Sciatic nerve (tissue), 2 donors: ENCODE measurements at regions of chr4 and their contacts with region 1.

Region 1: DNA sequence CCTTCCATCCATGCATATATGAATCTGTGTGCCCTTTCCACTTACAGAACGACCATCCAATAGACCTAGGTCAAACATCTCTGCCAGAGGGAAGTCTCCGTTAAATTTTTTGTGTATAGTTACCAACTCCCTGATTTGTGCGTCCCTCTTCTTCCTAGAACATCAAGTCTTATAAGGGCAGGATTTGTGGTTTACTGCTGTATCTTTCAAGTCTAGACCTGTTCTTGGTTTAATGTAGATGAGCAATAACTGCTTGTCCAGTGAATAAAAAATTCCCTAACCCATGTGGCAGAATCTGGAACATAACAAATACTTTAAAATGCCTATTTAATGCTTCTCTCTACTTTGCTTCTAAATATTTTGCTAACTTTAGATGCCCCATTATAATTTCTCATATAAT is 988.8 kb downstream of the RAPGEF2 start:
- DNase-seq: no peak
- ATAC-seq: no peak

Region 2: GRCh38 chr4:160026720-160027119 is 64.9 kb before region 1 on chr4:
- intact Hi-C with region 1: no loop called
- DNase-seq: no peak
- ATAC-seq: no peak

Region 3: GRCh38 chr4:160142579-160142978 is 50.9 kb after region 1 on chr4:
- intact Hi-C with region 1: no loop called
- DNase-seq: no peak
- ATAC-seq: no peak

Region 4: DNA sequence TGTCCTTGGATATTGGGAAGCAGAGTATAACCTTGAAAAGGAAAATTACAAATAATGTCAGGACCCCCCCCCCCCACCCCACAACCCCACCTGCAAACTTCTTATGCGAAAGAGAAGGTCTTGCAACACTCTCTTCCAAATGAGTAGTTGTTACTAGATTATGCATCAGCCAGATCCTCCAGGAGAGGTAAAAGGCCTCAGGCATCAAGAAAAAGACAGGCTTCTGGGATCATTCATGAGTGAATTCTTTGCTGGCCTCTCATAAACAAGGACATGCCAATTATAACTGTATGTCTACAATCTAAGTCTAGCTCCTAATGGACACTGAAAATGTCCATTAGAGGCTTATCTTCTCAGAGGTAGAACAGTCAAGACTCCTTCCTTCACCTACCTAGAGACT is 454.6 kb after region 1 on chr4:
- intact Hi-C with region 1: loop called (anchors 5 kb)
- DNase-seq: no peak
- ATAC-seq: no peak